ENCODE measurements at regions of chr7 and their contacts with region 1.

Region 1: GRCh38 chr7:8217200-8218068 is 44.5 kb downstream of the ICA1 start:
- DNase-seq: peak; percentile 8
- H3K4me3 Mint-ChIP-seq: no peak overlapping the region
- H3K27ac Mint-ChIP-seq: no peak overlapping the region
- H3K4me1 Mint-ChIP-seq: peaks cover 2% of the 10 kb centered on the region
- H3K27me3 Mint-ChIP-seq: no peaks in the 10 kb centered on the region

Region 2: GRCh38 chr7:7103343-7104313 is 1113.8 kb before region 1 on chr7:
- CTCF ChIA-PET with region 1: no interaction called
- intact Hi-C with region 1: loop called (anchors 1 kb)
- DNase-seq: no peak
- H3K4me3 Mint-ChIP-seq: no peak overlapping the region
- H3K27ac Mint-ChIP-seq: no peak overlapping the region
- H3K4me1 Mint-ChIP-seq: peaks cover 24% of the 10 kb centered on the region
- H3K27me3 Mint-ChIP-seq: no peaks in the 10 kb centered on the region

Region 3: DNA sequence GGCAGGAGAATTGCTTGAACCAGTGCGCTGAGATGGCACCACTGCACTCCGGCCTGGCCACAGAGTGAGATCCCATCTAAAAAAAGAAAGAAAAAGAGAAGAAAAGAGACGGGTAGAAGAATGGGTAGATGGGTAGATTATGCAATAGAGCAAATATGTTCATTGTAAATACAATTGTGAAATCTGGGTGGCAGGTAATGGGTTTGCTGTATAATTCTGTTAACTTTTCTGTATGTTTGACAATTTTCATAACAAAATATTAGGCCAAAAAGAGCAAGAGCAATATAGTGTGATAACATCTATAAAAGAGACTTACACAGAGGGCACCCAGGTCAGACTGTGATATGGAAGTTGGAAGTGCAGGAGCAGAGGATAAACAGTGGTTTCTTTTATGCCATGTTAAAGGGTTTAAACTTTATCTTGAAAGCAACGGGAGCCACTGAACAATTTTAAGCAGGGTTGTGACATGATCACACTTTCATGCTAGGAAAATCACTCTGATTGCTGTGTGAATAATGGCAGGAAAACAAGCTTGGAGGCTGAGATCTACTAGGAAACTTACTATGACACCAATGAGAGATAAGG is 675.1 kb before region 1 on chr7:
- CTCF ChIA-PET with region 1: no interaction called
- intact Hi-C with region 1: loop called (anchors 5 kb)
- DNase-seq: no peak
- H3K4me3 Mint-ChIP-seq: no peak overlapping the region
- H3K27ac Mint-ChIP-seq: no peak overlapping the region
- H3K4me1 Mint-ChIP-seq: no peaks in the 10 kb centered on the region
- H3K27me3 Mint-ChIP-seq: no peaks in the 10 kb centered on the region

Region 4: DNA sequence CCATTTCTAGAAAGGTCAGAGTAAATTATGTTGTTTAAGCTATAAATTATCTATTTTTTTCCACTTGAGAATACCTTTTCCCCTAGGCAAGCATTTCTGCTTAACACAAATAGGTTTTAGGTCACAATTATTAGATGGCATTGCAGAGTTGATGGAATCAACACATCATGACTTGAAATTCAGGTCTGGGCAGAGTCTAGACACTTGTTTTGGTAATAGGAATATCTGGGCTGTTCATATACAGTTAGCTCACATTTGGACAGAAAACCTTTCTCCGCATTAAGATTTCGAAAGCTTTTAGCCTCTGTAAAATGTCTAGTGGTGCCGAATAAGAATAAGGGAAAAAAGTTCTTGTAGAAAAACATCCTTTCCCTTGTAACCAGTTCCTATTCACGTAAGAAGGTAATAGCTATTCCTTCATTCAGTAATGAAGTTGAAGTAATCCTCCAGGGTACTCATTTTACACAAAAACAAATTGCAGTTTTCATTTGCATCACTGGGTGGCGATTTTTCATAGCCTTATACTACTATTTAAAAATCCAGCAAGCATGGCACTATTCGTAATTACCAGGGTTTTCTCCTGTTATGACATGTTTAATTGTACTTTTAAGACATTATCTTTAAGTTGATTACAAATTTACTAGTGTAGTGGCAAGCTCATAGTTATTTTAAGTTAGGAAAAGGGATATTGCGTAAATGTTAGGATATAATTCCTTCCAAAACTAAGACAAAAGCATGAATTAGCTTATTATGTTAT is 536.1 kb before region 1 on chr7:
- CTCF ChIA-PET with region 1: interaction called, 6 read pairs
- intact Hi-C with region 1: loop called (anchors 1 kb)
- DNase-seq: peak; percentile 66
- H3K4me3 Mint-ChIP-seq: no peak overlapping the region
- H3K27ac Mint-ChIP-seq: peak overlapping the region; percentile 9
- H3K4me1 Mint-ChIP-seq: peaks cover 36% of the 10 kb centered on the region
- H3K27me3 Mint-ChIP-seq: no peaks in the 10 kb centered on the region

Region 5: GRCh38 chr7:8190119-8190895 is 27.1 kb before region 1 on chr7:
- CTCF ChIA-PET with region 1: interaction called, 17 read pairs
- intact Hi-C with region 1: no loop called
- DNase-seq: peak; percentile 84
- H3K4me3 Mint-ChIP-seq: no peak overlapping the region
- H3K27ac Mint-ChIP-seq: no peak overlapping the region
- H3K4me1 Mint-ChIP-seq: peaks cover 10% of the 10 kb centered on the region
- H3K27me3 Mint-ChIP-seq: no peaks in the 10 kb centered on the region